Naive thymus-derived CD4-positive, alpha-beta T cell (primary cell): ENCODE measurements at regions of chr12 and their contacts with region 1.

Region 1: GRCh38 chr12:104958009-104958945 is at the start of gene SLC41A2:
- DNase-seq: peak; percentile 55 to 87 (median 74)
- ATAC-seq: peak; percentile 93
- H3K4me3 ChIP-seq: peak within 1 kb of the TSS; percentile 77
- H3K4me3 Mint-ChIP-seq: peak within 1 kb of the TSS; percentile 91 to 98 (median 96)
- H3K27ac ChIP-seq: peak within 1 kb of the TSS; percentile 59
- H3K27ac Mint-ChIP-seq: peak within 1 kb of the TSS; percentile 65 to 93 (median 89)
- H3K4me1 ChIP-seq: peaks cover 6 to 9% of the 10 kb centered on the region in 2 donors
- H3K4me1 Mint-ChIP-seq: peaks cover 8 to 29% (median 26%) of the 10 kb centered on the region in 7 donors
- H3K27me3 ChIP-seq: peaks cover 0 to 3% of the 10 kb centered on the region in 2 donors
- H3K27me3 Mint-ChIP-seq: peaks cover 5 to 49% (median 7%) of the 10 kb centered on the region in 5 donors
- total RNA-seq, gene SLC41A2: 2.0 to 12.7 (median 2.6) TPM

Region 2: GRCh38 chr12:104381731-104382480 is 576.4 kb before region 1 on chr12:
- CTCF ChIA-PET with region 1: interaction called, 5 read pairs
- POLR2A ChIA-PET with region 1: no interaction called
- intact Hi-C with region 1: loop called (anchors 1 to 5 kb)
- DNase-seq: peak; percentile 62 to 86 (median 74)
- ATAC-seq: peak; percentile 94
- H3K4me3 ChIP-seq: no peak overlapping the region
- H3K4me3 Mint-ChIP-seq: no peak overlapping the region
- H3K27ac ChIP-seq: no peak overlapping the region
- H3K27ac Mint-ChIP-seq: peak overlapping the region in 1 of 9 donors; percentile 17
- H3K4me1 ChIP-seq: peaks cover 0 to 6% of the 10 kb centered on the region in 2 donors
- H3K4me1 Mint-ChIP-seq: peaks cover 0 to 18% (median 6%) of the 10 kb centered on the region in 7 donors
- H3K27me3 ChIP-seq: no peaks in the 10 kb centered on the region
- H3K27me3 Mint-ChIP-seq: peaks cover 0 to 15% (median 10%) of the 10 kb centered on the region in 5 donors

Region 3: DNA sequence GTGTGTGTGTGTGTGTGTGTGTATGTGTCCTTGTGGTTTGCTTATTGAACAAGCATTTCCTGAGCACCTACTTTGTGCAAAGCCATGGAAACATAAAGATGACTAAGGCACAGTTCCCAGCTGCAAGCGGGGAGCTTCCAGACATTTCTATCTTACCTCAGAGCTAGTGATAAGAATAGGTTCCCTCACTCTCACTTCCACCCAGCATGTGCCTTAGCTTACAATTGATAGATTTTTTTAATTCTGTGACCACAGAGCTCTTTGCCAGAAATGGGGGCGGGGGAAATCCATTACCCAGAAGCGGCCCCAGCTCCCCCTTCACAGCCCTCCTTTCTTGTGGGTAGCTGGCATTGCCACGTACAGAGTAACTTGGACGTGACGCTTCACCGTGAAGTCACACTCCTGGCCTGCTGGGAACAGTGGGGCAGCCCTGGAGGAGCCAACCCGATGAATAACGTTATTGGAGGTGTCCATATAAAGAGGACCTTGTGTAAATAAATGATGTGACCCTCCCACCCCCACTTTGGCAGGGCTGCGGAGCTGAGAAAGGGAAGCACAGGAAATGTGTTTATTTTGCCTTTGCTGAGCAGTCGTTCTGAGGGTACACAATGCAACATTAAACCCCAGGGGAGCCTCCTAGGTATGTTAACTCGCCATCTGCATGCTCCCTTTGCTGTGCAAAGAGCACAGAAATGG is 262.7 kb before region 1 on chr12:
- CTCF ChIA-PET with region 1: no interaction called
- POLR2A ChIA-PET with region 1: no interaction called
- intact Hi-C with region 1: loop called in 1 of 2 experiments (anchors 5 kb)
- DNase-seq: peak; percentile 40 to 80 (median 67)
- ATAC-seq: peak; percentile 95
- H3K4me3 ChIP-seq: no peak overlapping the region
- H3K4me3 Mint-ChIP-seq: peak overlapping the region in 8 of 10 donors; percentile 39 to 71 (median 56)
- H3K27ac ChIP-seq: no peak overlapping the region
- H3K27ac Mint-ChIP-seq: peak overlapping the region in 8 of 9 donors; percentile 13 to 88 (median 62)
- H3K4me1 ChIP-seq: peaks cover 27 to 37% of the 10 kb centered on the region in 2 donors
- H3K4me1 Mint-ChIP-seq: peaks cover 41 to 79% (median 50%) of the 10 kb centered on the region in 7 donors
- H3K27me3 ChIP-seq: no peaks in the 10 kb centered on the region
- H3K27me3 Mint-ChIP-seq: no peaks in the 10 kb centered on the region

Region 4: DNA sequence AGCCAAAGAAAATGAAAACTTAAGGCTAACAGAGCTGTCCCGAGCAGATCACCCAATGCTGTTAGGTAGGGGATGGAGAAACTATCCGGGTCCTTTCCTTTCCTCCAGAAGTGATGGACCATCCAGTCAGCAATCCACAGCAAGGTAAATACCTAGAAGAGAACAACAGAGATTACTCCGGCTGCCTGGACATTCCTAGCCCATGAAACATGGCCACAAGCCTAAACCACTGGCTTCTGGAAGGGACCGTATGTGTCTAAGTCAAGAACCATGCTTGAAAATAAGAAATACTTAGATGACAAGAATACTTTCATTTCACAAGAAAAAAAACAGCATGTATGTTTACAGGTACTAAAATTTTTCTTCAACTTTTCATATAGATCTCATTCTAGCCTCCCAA is 153.1 kb before region 1 on chr12:
- CTCF ChIA-PET with region 1: no interaction called
- POLR2A ChIA-PET with region 1: no interaction called
- intact Hi-C with region 1: no loop called
- DNase-seq: no peak
- ATAC-seq: no peak
- H3K4me3 ChIP-seq: no peak overlapping the region
- H3K4me3 Mint-ChIP-seq: no peak overlapping the region
- H3K27ac ChIP-seq: no peak overlapping the region
- H3K27ac Mint-ChIP-seq: no peak overlapping the region
- H3K4me1 ChIP-seq: no peaks in the 10 kb centered on the region
- H3K4me1 Mint-ChIP-seq: no peaks in the 10 kb centered on the region
- H3K27me3 ChIP-seq: no peaks in the 10 kb centered on the region
- H3K27me3 Mint-ChIP-seq: peaks cover 0 to 23% (median 0%) of the 10 kb centered on the region in 5 donors

Region 5: GRCh38 chr12:104877123-104877705 is 81.1 kb before region 1 on chr12:
- CTCF ChIA-PET with region 1: no interaction called
- POLR2A ChIA-PET with region 1: no interaction called
- intact Hi-C with region 1: loop called in 1 of 2 experiments (anchors 5 kb)
- DNase-seq: peak in 7 of 9 donors; percentile 5 to 52 (median 29)
- ATAC-seq: peak; percentile 56
- H3K4me3 ChIP-seq: no peak overlapping the region
- H3K4me3 Mint-ChIP-seq: no peak overlapping the region
- H3K27ac ChIP-seq: no peak overlapping the region
- H3K27ac Mint-ChIP-seq: no peak overlapping the region
- H3K4me1 ChIP-seq: no peaks in the 10 kb centered on the region
- H3K4me1 Mint-ChIP-seq: peaks cover 0 to 9% (median 0%) of the 10 kb centered on the region in 7 donors
- H3K27me3 ChIP-seq: no peaks in the 10 kb centered on the region
- H3K27me3 Mint-ChIP-seq: peaks cover 0 to 12% (median 0%) of the 10 kb centered on the region in 5 donors

Region 6: GRCh38 chr12:105053116-105053572 is 94.9 kb after region 1 on chr12:
- CTCF ChIA-PET with region 1: no interaction called
- POLR2A ChIA-PET with region 1: no interaction called
- intact Hi-C with region 1: loop called (anchors 1 to 5 kb)
- DNase-seq: peak; percentile 35 to 76 (median 67)
- ATAC-seq: peak; percentile 94
- H3K4me3 ChIP-seq: no peak overlapping the region
- H3K4me3 Mint-ChIP-seq: no peak overlapping the region
- H3K27ac ChIP-seq: no peak overlapping the region
- H3K27ac Mint-ChIP-seq: no peak overlapping the region
- H3K4me1 ChIP-seq: no peaks in the 10 kb centered on the region
- H3K4me1 Mint-ChIP-seq: peaks cover 0 to 5% (median 0%) of the 10 kb centered on the region in 7 donors
- H3K27me3 ChIP-seq: no peaks in the 10 kb centered on the region
- H3K27me3 Mint-ChIP-seq: peaks cover 0 to 7% (median 0%) of the 10 kb centered on the region in 5 donors